HepG2 (cell line): ENCODE measurements at regions of chr7 and their contacts with region 1.

Region 1: DNA sequence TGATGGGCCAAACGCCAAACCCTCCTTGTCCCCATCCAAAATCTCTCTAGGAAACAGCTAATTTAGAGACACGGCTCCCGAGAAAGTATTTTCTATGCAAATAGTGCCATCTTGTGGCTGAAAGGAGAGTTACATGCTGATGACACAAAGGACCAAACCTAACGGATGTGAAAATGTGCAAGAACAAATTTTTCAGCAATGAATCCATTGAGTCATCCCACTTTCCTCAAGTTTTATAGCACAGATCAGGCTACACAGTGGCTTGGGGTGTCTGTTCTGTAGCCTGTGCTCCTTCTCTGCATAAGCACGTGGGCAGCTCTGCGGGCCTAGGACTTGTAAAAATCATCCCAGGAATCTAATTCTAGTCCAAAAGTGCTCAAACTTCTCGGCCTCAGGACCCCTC is 154.8 kb upstream of the PRR15 start:
- DNase-seq: peak; percentile 61
- ATAC-seq: 0 out of 3 replicates have a peak, but pooled peaks have one; percentile 10
- H3K4me3 ChIP-seq: no peak overlapping the region
- H3K27ac ChIP-seq: no peak overlapping the region
- H3K4me1 ChIP-seq: peaks cover 51% of the 10 kb centered on the region
- H3K27me3 ChIP-seq: no peaks in the 10 kb centered on the region
- CTCF ChIP-seq: peak; percentile 87
- EP300 ChIP-seq: no peak
- POLR2A ChIP-seq: no peak
- RAD21 ChIP-seq: peak; percentile 80

Region 2: DNA sequence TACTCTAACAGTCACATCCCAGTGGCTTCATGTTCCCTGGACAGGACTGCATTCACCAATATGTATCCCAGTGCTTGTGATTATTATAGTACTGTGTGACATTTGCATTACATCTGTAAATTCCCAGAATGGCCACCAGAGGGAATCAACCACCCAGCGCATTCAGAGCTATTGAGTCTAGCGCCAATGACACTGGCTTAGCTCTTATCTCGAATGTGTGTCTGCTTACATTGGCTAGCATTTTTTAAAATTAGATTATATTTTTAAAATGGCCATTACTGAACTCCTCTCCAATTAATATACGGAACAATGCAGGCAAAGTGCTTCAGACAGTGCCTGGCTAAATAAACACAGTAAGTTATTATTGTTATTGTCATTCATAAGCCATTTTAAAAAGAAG is 487.0 kb before region 1 on chr7:
- CTCF ChIA-PET with region 1: interaction called, 6 read pairs
- POLR2A ChIA-PET with region 1: no interaction called
- in situ Hi-C with region 1: loop called (anchors 5 kb)
- intact Hi-C with region 1: loop called (anchors 2 kb)
- DNase-seq: peak; percentile 69
- ATAC-seq: peak; percentile 94
- H3K4me3 ChIP-seq: peak overlapping the region in 1 of 3 experiments; percentile 49; a peak in 1 of 6 replicates
- H3K27ac ChIP-seq: no peak overlapping the region
- H3K4me1 ChIP-seq: peaks cover 19% of the 10 kb centered on the region
- H3K27me3 ChIP-seq: no peaks in the 10 kb centered on the region
- CTCF ChIP-seq: peak; percentile 78
- EP300 ChIP-seq: no peak
- POLR2A ChIP-seq: no peak
- RAD21 ChIP-seq: no peak

Region 3: GRCh38 chr7:29105752-29106668 is 302.8 kb before region 1 on chr7:
- CTCF ChIA-PET with region 1: no interaction called
- POLR2A ChIA-PET with region 1: interaction called, 4 read pairs
- in situ Hi-C with region 1: no loop called
- intact Hi-C with region 1: loop called (anchors 5 kb)
- DNase-seq: peak; percentile 56
- ATAC-seq: peak; percentile 93
- H3K4me3 ChIP-seq: no peak overlapping the region
- H3K27ac ChIP-seq: no peak overlapping the region
- H3K4me1 ChIP-seq: peaks cover 18% of the 10 kb centered on the region
- H3K27me3 ChIP-seq: no peaks in the 10 kb centered on the region
- CTCF ChIP-seq: peak; percentile 90
- EP300 ChIP-seq: no peak
- POLR2A ChIP-seq: no peak
- RAD21 ChIP-seq: peak; percentile 71

Region 4: GRCh38 chr7:29119538-29120199 is 289.2 kb before region 1 on chr7:
- CTCF ChIA-PET with region 1: no interaction called
- POLR2A ChIA-PET with region 1: no interaction called
- in situ Hi-C with region 1: loop called (anchors 10 kb)
- intact Hi-C with region 1: no loop called
- DNase-seq: no peak
- ATAC-seq: no peak
- H3K4me3 ChIP-seq: no peak overlapping the region
- H3K27ac ChIP-seq: no peak overlapping the region
- H3K4me1 ChIP-seq: peaks cover 31% of the 10 kb centered on the region
- H3K27me3 ChIP-seq: no peaks in the 10 kb centered on the region
- CTCF ChIP-seq: no peak
- EP300 ChIP-seq: no peak
- POLR2A ChIP-seq: no peak
- RAD21 ChIP-seq: no peak

Region 5: DNA sequence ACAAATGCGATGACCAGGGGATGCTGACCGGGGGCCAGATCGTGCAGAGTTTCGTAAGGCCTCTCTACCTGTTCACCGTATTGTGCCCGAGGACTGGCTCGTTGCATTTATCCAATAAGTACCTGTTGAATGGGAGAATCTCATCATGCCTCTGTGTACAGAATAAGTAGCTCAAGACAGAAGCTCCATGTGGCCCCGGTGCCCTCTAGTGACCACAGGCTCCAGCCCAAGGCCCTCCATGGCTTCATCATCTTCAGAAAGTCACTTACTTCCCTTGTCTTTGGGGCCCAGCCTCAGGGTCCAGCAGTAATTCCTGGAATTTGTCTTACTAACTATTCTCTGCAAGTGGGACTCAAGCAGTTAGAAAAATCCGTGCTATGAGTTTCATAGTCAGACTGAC is 63.2 kb before region 1 on chr7:
- CTCF ChIA-PET with region 1: interaction called, 3 read pairs
- POLR2A ChIA-PET with region 1: no interaction called
- in situ Hi-C with region 1: no loop called
- intact Hi-C with region 1: loop called (anchors 5 kb)
- DNase-seq: peak; percentile 38
- ATAC-seq: peak; percentile 87
- H3K4me3 ChIP-seq: no peak overlapping the region
- H3K27ac ChIP-seq: no peak overlapping the region
- H3K4me1 ChIP-seq: peaks cover 41% of the 10 kb centered on the region
- H3K27me3 ChIP-seq: no peaks in the 10 kb centered on the region
- CTCF ChIP-seq: peak; percentile 81
- EP300 ChIP-seq: no peak
- POLR2A ChIP-seq: no peak
- RAD21 ChIP-seq: peak; percentile 53

Region 6: DNA sequence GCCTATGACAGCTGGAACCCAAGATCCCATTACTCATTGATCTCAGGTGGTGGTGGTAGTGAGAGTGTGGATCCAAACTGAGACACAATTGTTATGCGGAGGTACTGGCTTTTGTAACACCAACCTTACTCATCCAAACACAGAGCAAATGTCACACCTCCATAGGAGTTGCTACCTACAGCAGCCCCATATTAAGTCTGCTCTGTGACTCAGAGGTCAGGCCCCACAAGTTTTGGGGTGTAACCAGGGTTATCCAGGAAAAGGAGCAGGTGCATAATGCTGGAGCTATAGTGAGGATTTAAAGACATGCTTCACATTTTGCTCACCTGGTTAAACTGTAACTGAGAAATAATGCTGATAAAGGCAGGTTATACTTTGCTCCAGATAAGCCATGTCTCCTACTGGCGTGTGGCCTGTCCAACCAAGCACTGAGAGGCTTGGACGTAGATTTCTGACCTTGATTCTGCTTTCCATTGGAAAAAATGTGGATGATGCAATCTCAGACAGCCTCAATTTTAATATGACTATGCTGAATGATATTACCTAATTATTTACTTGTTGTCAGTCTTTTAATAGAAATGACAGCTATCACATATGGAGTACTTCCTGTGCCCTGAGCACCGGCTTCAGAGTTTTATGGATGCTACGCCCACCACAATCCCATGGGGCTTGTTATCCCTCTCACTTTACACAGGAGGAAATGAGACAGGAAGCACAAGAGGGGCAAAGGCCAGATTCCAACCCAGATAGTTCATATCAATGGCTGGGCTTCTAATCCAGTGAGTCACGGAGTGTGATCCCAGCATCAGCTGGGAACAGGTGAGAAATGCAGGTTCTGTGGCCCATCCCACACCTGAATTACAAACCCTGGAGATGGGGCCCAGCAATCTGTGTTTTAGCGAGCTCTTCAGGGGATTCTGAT is 32.9 kb before region 1 on chr7:
- CTCF ChIA-PET with region 1: no interaction called
- POLR2A ChIA-PET with region 1: interaction called, 3 read pairs
- in situ Hi-C with region 1: no loop called
- intact Hi-C with region 1: loop called (anchors 1 kb)
- DNase-seq: peak; percentile 71
- ATAC-seq: peak; percentile 95
- H3K4me3 ChIP-seq: no peak overlapping the region; a peak in 1 of 6 replicates
- H3K27ac ChIP-seq: peak overlapping the region; percentile 48
- H3K4me1 ChIP-seq: peaks cover 29% of the 10 kb centered on the region
- H3K27me3 ChIP-seq: no peaks in the 10 kb centered on the region
- CTCF ChIP-seq: no peak
- EP300 ChIP-seq: no peak
- POLR2A ChIP-seq: no peak
- RAD21 ChIP-seq: no peak

Region 7: GRCh38 chr7:29449569-29450271 is 40.9 kb after region 1 on chr7:
- CTCF ChIA-PET with region 1: no interaction called
- POLR2A ChIA-PET with region 1: no interaction called
- in situ Hi-C with region 1: no loop called
- intact Hi-C with region 1: no loop called
- DNase-seq: peak; percentile 66
- ATAC-seq: peak; percentile 85
- H3K4me3 ChIP-seq: no peak overlapping the region
- H3K27ac ChIP-seq: peak overlapping the region; percentile 25
- H3K4me1 ChIP-seq: peaks cover 33% of the 10 kb centered on the region
- H3K27me3 ChIP-seq: no peaks in the 10 kb centered on the region
- CTCF ChIP-seq: no peak
- EP300 ChIP-seq: no peak
- POLR2A ChIP-seq: no peak
- RAD21 ChIP-seq: no peak